Heart left ventricle (tissue), 16 donors: ENCODE measurements at regions of chr17 and their contacts with region 1.

Region 1: DNA sequence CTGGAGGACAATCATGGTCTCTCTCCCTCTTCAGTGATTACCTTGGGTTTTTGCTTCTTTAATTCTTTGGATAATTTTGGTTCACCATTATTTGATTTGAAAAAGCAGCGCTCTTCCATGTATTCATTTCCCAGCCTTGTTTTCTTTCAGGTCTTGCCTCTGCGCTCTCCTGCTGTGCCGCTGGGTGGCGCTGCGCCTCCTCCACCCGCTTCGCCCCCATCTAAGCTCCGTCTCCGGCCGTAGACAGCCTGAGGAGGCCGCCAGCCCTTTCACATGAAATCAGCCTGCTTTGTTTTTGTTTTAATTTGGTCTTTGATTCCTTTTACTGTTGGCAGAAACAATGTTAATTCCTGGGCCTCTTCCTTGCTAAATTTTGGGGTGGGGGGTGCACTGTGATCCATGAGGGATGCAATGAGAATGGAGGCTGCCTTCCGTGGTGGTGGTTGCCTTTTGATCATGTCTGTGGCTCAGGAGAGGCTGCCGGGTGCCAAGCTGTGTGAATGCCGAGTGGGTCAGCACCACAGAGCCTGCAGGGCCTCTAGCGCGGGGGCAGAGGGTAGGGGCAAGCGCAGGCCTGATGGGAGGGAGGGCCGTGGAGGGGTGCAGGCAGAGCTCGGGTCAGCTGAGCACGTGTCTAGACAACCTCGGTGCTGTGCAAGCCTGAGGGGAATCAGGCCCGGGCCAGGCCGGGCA is 64.1 kb downstream of the PLD6 start:
- DNase-seq: no peak
- ATAC-seq: peak in 2 of 4 donors; percentile 48 to 55
- H3K4me3 ChIP-seq: no peak overlapping the region
- H3K27ac ChIP-seq: peak overlapping the region in 7 of 12 donors; percentile 15 to 46 (median 25)
- H3K4me1 ChIP-seq: peaks cover 0 to 44% (median 20%) of the 10 kb centered on the region in 12 donors
- H3K27me3 ChIP-seq: no peaks in the 10 kb centered on the region
- CTCF ChIP-seq: peak; percentile 71 to 88 (median 78)
- POLR2A ChIP-seq: no peak

Region 2: DNA sequence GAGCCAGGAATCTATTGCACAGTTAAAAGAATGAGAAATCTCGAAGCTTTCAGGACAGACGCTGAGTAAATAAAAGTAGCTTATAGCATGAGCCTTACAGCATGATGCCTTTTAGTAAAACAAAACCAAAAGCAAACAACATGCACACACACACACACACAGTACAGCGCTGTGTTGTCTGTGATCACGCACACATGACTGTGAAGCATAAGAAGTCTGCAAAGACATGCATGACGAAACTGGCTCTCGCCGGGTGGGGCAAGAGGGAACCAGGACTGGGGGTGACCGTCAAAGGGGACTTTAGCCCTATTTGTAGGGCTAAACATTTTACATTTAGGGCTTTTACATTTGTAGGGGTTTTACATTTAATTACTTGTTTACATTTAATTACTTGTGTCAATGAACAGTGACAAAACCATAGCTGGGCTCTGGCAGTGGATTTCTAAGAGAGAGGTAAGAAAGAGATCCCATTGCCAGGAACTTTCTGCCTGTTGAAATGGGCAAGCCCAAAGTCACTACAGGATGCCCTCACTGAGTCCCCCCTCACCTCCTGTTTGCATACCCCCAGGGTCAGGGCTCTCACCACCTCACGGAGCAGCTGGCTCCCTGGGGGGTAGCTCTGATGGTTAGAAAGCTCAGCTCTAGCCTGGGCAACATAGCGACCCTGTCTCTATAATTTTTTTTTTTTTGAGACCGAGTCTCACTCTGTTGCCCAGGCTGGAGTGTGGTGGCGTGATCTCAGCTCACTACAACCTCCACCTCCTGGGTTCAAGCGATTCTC is 168.1 kb before region 1 on chr17:
- intact Hi-C with region 1: no loop called
- DNase-seq: no peak
- ATAC-seq: no peak
- H3K4me3 ChIP-seq: no peak overlapping the region
- H3K27ac ChIP-seq: no peak overlapping the region
- H3K4me1 ChIP-seq: peaks cover 0 to 4% (median 0%) of the 10 kb centered on the region in 12 donors
- H3K27me3 ChIP-seq: no peaks in the 10 kb centered on the region
- CTCF ChIP-seq: no peak
- POLR2A ChIP-seq: no peak

Region 3: GRCh38 chr17:17313350-17313991 is 171.5 kb after region 1 on chr17:
- intact Hi-C with region 1: loop called in 2 of 10 experiments (anchors 10 kb)
- DNase-seq: peak in 2 of 5 donors; percentile 43
- ATAC-seq: peak in 3 of 4 donors; percentile 57 to 71 (median 66)
- H3K4me3 ChIP-seq: no peak overlapping the region
- H3K27ac ChIP-seq: no peak overlapping the region
- H3K4me1 ChIP-seq: no peaks in the 10 kb centered on the region
- H3K27me3 ChIP-seq: no peaks in the 10 kb centered on the region
- CTCF ChIP-seq: peak; percentile 29 to 58 (median 45)
- POLR2A ChIP-seq: no peak